CD8-positive, alpha-beta T cell (primary cell): ENCODE measurements at regions of chrX and their contacts with region 1.

Region 1: GRCh38 chrX:42869659-42870476 is 91.9 kb upstream of the PPP1R2C start:
- DNase-seq: peak in 2 of 9 experiments; percentile 25 to 39
- ATAC-seq: no peak
- H3K4me3 ChIP-seq: no peak overlapping the region
- H3K4me3 Mint-ChIP-seq: no peak overlapping the region
- H3K27ac ChIP-seq: no peak overlapping the region
- H3K27ac Mint-ChIP-seq: no peak overlapping the region
- H3K4me1 ChIP-seq: no peaks in the 10 kb centered on the region
- H3K4me1 Mint-ChIP-seq: peaks cover 22% of the 10 kb centered on the region
- H3K27me3 ChIP-seq: no peaks in the 10 kb centered on the region
- H3K27me3 Mint-ChIP-seq: no peaks in the 10 kb centered on the region
- CTCF ChIP-seq: no peak

Region 2: DNA sequence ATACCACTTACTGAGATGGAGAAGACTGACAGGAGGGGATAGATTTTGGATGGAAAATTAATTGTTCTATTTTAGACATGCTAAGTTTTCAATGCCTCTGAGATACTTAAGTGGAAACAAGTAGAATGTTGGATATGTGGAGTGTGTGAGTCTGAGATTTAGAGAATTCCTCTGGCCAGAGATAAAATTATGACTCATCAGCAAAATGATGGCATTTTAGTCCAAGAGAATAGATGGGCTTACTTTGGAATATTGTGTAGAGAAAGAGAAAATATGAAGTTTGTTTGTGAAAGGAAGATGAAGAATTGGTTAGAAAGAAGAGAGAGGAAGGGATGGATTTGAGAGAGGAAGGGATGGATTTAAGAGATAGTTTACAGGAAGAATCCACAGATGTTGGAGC is 16.7 kb after region 1 on chrX:
- CTCF ChIA-PET with region 1: no interaction called
- POLR2A ChIA-PET with region 1: no interaction called
- intact Hi-C with region 1: no loop called
- DNase-seq: no peak
- ATAC-seq: no peak
- H3K4me3 ChIP-seq: no peak overlapping the region
- H3K4me3 Mint-ChIP-seq: no peak overlapping the region
- H3K27ac ChIP-seq: no peak overlapping the region
- H3K27ac Mint-ChIP-seq: no peak overlapping the region
- H3K4me1 ChIP-seq: no peaks in the 10 kb centered on the region
- H3K4me1 Mint-ChIP-seq: no peaks in the 10 kb centered on the region
- H3K27me3 ChIP-seq: no peaks in the 10 kb centered on the region
- H3K27me3 Mint-ChIP-seq: no peaks in the 10 kb centered on the region
- CTCF ChIP-seq: no peak

Region 3: GRCh38 chrX:42920752-42921151 is 50.9 kb after region 1 on chrX:
- CTCF ChIA-PET with region 1: no interaction called
- POLR2A ChIA-PET with region 1: no interaction called
- intact Hi-C with region 1: loop called in 1 of 2 experiments (anchors 10 kb)
- DNase-seq: no peak
- ATAC-seq: no peak
- H3K4me3 ChIP-seq: no peak overlapping the region
- H3K4me3 Mint-ChIP-seq: no peak overlapping the region
- H3K27ac ChIP-seq: no peak overlapping the region
- H3K27ac Mint-ChIP-seq: no peak overlapping the region
- H3K4me1 ChIP-seq: no peaks in the 10 kb centered on the region
- H3K4me1 Mint-ChIP-seq: no peaks in the 10 kb centered on the region
- H3K27me3 ChIP-seq: no peaks in the 10 kb centered on the region
- H3K27me3 Mint-ChIP-seq: no peaks in the 10 kb centered on the region
- CTCF ChIP-seq: no peak

Region 4: DNA sequence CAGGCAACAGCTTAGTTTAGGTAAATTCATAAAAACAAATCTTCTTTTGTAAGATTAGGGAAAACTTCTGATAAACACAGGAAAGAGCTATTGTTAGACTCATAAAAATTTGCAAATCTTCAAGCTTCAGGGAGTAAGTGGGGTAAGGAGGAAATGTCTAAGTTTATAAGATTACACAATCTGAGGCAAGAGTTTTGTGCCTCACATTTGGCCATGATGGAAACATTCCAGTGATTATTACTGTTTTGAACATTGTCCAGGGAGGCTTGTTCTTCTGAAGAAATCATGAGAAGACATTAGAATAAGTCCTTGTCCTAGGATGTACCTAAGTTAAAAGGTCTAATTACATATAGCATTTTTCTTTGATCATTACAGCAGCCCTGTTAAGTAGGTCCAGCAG is 939.6 kb after region 1 on chrX:
- CTCF ChIA-PET with region 1: no interaction called
- POLR2A ChIA-PET with region 1: no interaction called
- intact Hi-C with region 1: no loop called
- DNase-seq: no peak
- ATAC-seq: no peak
- H3K4me3 ChIP-seq: no peak overlapping the region
- H3K4me3 Mint-ChIP-seq: no peak overlapping the region
- H3K27ac ChIP-seq: no peak overlapping the region
- H3K27ac Mint-ChIP-seq: no peak overlapping the region
- H3K4me1 ChIP-seq: no peaks in the 10 kb centered on the region
- H3K4me1 Mint-ChIP-seq: peaks cover 12% of the 10 kb centered on the region
- H3K27me3 ChIP-seq: no peaks in the 10 kb centered on the region
- H3K27me3 Mint-ChIP-seq: no peaks in the 10 kb centered on the region
- CTCF ChIP-seq: no peak